ENCODE measurements at regions of chr20 and their contacts with region 1.

Region 1: GRCh38 chr20:47304287-47304686 is 52.2 kb downstream of the ZMYND8 start:
- DNase-seq: peak; percentile 59
- ATAC-seq: peak; percentile 98
- H3K4me3 ChIP-seq: no peak overlapping the region
- H3K27ac ChIP-seq: no peak overlapping the region
- H3K4me1 ChIP-seq: peaks cover 8% of the 10 kb centered on the region; the same call in 1 of the 2 replicates
- H3K27me3 ChIP-seq: no peaks in the 10 kb centered on the region
- CTCF ChIP-seq: peak; percentile 52; the same call in 1 of the 2 replicates

Region 2: DNA sequence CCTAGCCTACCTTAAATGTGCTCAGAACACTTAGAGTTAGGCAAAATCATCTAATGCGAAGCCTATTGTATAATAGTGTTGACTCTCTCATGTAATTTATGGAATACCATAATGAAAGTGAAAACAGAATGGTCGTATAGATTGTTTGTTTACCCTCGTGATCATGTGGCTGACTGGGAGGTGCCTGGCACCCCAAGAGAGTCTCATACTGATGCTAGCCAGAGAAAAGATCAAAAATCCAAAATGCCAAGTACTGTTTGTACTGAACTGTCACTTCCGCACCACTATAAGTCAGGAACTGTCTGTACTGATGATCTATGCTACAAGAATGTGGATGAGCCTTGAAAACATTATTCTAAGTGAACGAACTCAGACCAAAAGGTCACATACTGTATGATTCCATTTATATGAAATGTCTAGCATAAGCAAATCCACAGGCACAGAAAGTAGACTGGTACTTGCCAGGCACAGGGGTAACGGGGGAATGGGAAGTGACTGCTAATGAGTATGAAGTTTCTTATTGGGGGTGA is 29.8 kb after region 1 on chr20:
- CTCF ChIA-PET with region 1: no interaction called
- POLR2A ChIA-PET with region 1: no interaction called
- intact Hi-C with region 1: loop called (anchors 2 kb)
- DNase-seq: peak; percentile 98
- ATAC-seq: peak; percentile 95
- H3K4me3 ChIP-seq: peak overlapping the region; percentile 58
- H3K27ac ChIP-seq: peak overlapping the region; percentile 71
- H3K4me1 ChIP-seq: peaks cover 47% of the 10 kb centered on the region
- H3K27me3 ChIP-seq: no peaks in the 10 kb centered on the region
- CTCF ChIP-seq: no peak